ENCODE measurements at regions of chr4 and their contacts with region 1.

Region 1: GRCh38 chr4:11367371-11367770 is 61.3 kb downstream of the HS3ST1 start:
- DNase-seq: peak; percentile 60 to 79
- ATAC-seq: peak; percentile 83 to 84
- H3K4me3 ChIP-seq: no peak overlapping the region
- H3K27ac ChIP-seq: no peak overlapping the region
- H3K4me1 ChIP-seq: no peaks in the 10 kb centered on the region
- H3K27me3 ChIP-seq: no peaks in the 10 kb centered on the region
- CTCF ChIP-seq: no peak
- POLR2A ChIP-seq: no peak

Region 2: GRCh38 chr4:11106190-11106589 is 261.2 kb before region 1 on chr4:
- in situ Hi-C with region 1: no loop called
- intact Hi-C with region 1: no loop called
- DNase-seq: no peak
- ATAC-seq: no peak
- H3K4me3 ChIP-seq: no peak overlapping the region
- H3K27ac ChIP-seq: no peak overlapping the region
- H3K4me1 ChIP-seq: no peaks in the 10 kb centered on the region
- H3K27me3 ChIP-seq: no peaks in the 10 kb centered on the region
- CTCF ChIP-seq: no peak
- POLR2A ChIP-seq: no peak

Region 3: DNA sequence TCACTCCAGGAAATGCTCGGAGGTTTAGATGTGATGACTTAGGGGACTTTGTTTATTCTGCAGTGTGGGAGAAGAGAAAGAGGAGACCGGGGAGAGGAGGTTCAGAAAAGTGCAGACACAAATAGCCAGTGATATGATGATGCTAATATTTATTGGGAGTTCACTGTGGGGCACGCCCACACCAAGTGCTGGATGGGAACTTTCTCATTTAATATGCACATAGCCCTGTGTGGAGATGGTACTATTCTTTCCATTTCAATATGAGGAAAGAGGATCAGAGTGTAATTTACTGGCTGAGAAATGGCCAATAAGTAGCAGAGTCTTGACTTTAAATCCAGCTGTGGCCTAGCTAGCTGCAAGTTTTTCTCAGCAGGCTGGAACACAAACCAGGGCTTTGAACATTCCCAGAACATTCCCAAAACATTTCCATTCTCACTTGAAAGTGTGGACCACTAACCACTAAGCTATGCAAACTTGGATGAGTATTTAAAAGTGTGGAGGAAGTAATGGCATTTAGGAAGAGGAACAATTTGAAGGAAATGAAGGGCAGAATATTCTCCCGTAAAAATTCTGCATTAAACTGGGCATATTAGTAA is 170.3 kb before region 1 on chr4:
- in situ Hi-C with region 1: no loop called
- intact Hi-C with region 1: no loop called
- DNase-seq: no peak
- ATAC-seq: no peak
- H3K4me3 ChIP-seq: no peak overlapping the region
- H3K27ac ChIP-seq: no peak overlapping the region
- H3K4me1 ChIP-seq: no peaks in the 10 kb centered on the region
- H3K27me3 ChIP-seq: no peaks in the 10 kb centered on the region
- CTCF ChIP-seq: no peak
- POLR2A ChIP-seq: no peak

Region 4: DNA sequence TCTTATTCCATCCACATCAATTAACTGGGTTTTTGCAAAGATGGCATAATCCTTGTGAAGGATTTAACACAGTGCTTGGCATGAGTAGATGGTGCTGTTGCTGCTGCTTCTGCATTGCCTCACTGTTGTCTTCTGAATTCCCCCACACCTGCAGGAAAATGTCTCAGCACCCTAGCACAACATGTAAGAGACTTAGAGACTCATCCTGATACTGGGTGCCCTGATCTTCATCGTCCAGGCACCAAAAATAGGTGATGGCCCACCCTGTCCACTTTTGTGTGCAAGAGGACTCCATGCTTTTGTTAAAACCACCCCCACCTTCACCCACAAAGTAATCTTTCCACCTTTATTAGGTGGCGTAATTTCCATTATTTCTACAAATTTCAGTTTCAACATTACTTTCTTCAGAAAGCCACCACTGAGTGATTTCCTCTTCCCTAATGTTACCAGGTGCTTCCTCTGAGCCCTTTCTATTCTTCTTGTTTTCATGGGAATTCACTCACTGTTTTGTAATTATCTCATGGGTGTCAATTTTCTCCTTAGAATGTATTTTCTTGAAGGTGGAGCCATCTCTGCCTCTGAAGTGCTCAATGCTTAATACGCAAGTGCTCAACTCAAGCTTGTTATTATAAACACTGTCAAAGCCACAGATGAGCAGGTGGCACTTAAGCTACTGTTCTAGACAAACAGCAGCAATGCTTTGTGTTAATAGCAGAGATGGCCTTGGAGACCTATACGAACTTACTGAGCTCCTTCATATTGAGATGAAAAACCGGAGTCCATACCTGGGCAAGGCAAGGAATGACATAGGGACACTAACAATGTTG is 28.2 kb before region 1 on chr4:
- in situ Hi-C with region 1: no loop called
- intact Hi-C with region 1: loop called (anchors 1 kb)
- DNase-seq: no peak
- ATAC-seq: no peak
- H3K4me3 ChIP-seq: no peak overlapping the region
- H3K27ac ChIP-seq: no peak overlapping the region
- H3K4me1 ChIP-seq: no peaks in the 10 kb centered on the region
- H3K27me3 ChIP-seq: no peaks in the 10 kb centered on the region
- CTCF ChIP-seq: no peak
- POLR2A ChIP-seq: no peak